CD4-positive, alpha-beta memory T cell (primary cell): ENCODE measurements at regions of chr6 and their contacts with region 1.

Region 1: GRCh38 chr6:52361945-52362442 is at the start of gene PAQR8:
- DNase-seq: peak; percentile 77 to 88 (median 85)
- H3K4me3 ChIP-seq: peak within 1 kb of the TSS; percentile 62 to 97
- H3K4me3 Mint-ChIP-seq: peak within 1 kb of the TSS; percentile 93 to 99 (median 98)
- H3K27ac ChIP-seq: peak within 1 kb of the TSS; percentile 90
- H3K27ac Mint-ChIP-seq: peak within 1 kb of the TSS; percentile 90 to 98 (median 98)
- H3K4me1 ChIP-seq: peaks cover 41% of the 10 kb centered on the region
- H3K4me1 Mint-ChIP-seq: peaks cover 28 to 53% (median 41%) of the 10 kb centered on the region in 4 donors
- H3K27me3 ChIP-seq: no peaks in the 10 kb centered on the region
- H3K27me3 Mint-ChIP-seq: no peaks in the 10 kb centered on the region
- total RNA-seq, gene PAQR8: 36.4 to 40.9 TPM

Region 2: DNA sequence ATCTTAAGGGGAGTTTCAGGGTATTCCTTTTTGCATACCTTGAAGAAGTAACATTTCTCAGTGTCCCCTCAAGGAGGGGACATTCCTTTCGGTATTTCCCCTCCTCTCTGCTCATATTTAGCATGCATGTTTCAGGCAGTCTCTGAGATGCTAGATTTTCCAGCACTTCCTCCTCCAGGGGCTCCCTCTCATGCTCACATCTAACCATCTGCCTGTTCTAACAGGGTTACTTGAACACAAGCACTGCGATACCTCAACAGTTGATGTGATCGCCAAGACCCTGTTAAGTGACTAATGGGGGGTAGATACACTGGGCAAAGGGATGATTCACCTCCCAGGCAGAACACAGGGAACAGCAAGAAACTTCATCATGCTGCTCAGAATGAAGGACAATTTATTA is 64.6 kb before region 1 on chr6:
- CTCF ChIA-PET with region 1: interaction called, 4 read pairs
- POLR2A ChIA-PET with region 1: interaction called, 15 read pairs
- intact Hi-C with region 1: no loop called
- DNase-seq: peak in 1 of 5 donors; percentile 47
- H3K4me3 ChIP-seq: no peak overlapping the region
- H3K4me3 Mint-ChIP-seq: peak overlapping the region; percentile 78 to 91 (median 80)
- H3K27ac ChIP-seq: peak overlapping the region; percentile 69
- H3K27ac Mint-ChIP-seq: peak overlapping the region; percentile 22 to 99 (median 98)
- H3K4me1 ChIP-seq: peaks cover 39% of the 10 kb centered on the region
- H3K4me1 Mint-ChIP-seq: peaks cover 23 to 62% (median 36%) of the 10 kb centered on the region in 4 donors
- H3K27me3 ChIP-seq: no peaks in the 10 kb centered on the region
- H3K27me3 Mint-ChIP-seq: no peaks in the 10 kb centered on the region

Region 3: DNA sequence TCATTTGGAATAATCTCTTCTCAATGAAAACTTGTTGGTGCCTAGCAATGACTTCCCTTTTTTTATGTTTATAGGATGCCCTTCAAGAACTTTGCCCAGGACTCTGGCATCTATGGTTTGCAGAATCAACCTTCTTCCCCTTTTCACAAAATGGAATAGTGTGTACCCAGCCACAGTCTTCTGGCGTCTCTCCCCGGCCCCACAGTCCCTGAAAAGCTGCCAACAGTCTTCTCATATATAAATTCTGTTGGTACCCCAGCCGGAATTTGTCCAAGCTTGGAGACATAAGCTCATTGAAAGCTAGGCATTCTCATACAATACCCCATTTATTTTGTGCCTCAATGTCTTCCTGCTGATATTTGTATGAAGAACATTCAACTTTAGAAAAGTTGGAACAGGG is 51.1 kb before region 1 on chr6:
- CTCF ChIA-PET with region 1: interaction called, 14 read pairs
- POLR2A ChIA-PET with region 1: interaction called, 49 read pairs
- intact Hi-C with region 1: no loop called
- DNase-seq: no peak
- H3K4me3 ChIP-seq: no peak overlapping the region
- H3K4me3 Mint-ChIP-seq: peak overlapping the region in 3 of 8 donors; percentile 9 to 36 (median 23)
- H3K27ac ChIP-seq: no peak overlapping the region
- H3K27ac Mint-ChIP-seq: peak overlapping the region in 3 of 7 donors; percentile 32 to 74 (median 50)
- H3K4me1 ChIP-seq: peaks cover 46% of the 10 kb centered on the region
- H3K4me1 Mint-ChIP-seq: peaks cover 35 to 73% (median 49%) of the 10 kb centered on the region in 4 donors
- H3K27me3 ChIP-seq: no peaks in the 10 kb centered on the region
- H3K27me3 Mint-ChIP-seq: no peaks in the 10 kb centered on the region

Region 4: GRCh38 chr6:52377538-52378221 is 15.7 kb after region 1 on chr6:
- CTCF ChIA-PET with region 1: interaction called, 26 read pairs
- POLR2A ChIA-PET with region 1: interaction called, 43 read pairs
- intact Hi-C with region 1: loop called (anchors 2 kb)
- DNase-seq: peak in 2 of 5 donors; percentile 19 to 48
- H3K4me3 ChIP-seq: no peak overlapping the region
- H3K4me3 Mint-ChIP-seq: peak overlapping the region; percentile 8 to 83 (median 59)
- H3K27ac ChIP-seq: no peak overlapping the region
- H3K27ac Mint-ChIP-seq: peak overlapping the region; percentile 58 to 89 (median 86)
- H3K4me1 ChIP-seq: peaks cover 67% of the 10 kb centered on the region
- H3K4me1 Mint-ChIP-seq: peaks cover 56 to 86% (median 74%) of the 10 kb centered on the region in 4 donors
- H3K27me3 ChIP-seq: no peaks in the 10 kb centered on the region
- H3K27me3 Mint-ChIP-seq: no peaks in the 10 kb centered on the region

Region 5: GRCh38 chr6:52399511-52400312 is 37.7 kb after region 1 on chr6:
- CTCF ChIA-PET with region 1: interaction called, 74 read pairs
- POLR2A ChIA-PET with region 1: interaction called, 133 read pairs
- intact Hi-C with region 1: loop called (anchors 1 kb)
- DNase-seq: peak; percentile 36 to 53 (median 47)
- H3K4me3 ChIP-seq: no peak overlapping the region
- H3K4me3 Mint-ChIP-seq: peak overlapping the region in 7 of 8 donors; percentile 32 to 82 (median 63)
- H3K27ac ChIP-seq: peak overlapping the region; percentile 67
- H3K27ac Mint-ChIP-seq: peak overlapping the region; percentile 95 to 99 (median 96)
- H3K4me1 ChIP-seq: peaks cover 68% of the 10 kb centered on the region
- H3K4me1 Mint-ChIP-seq: peaks cover 51 to 84% (median 60%) of the 10 kb centered on the region in 4 donors
- H3K27me3 ChIP-seq: no peaks in the 10 kb centered on the region
- H3K27me3 Mint-ChIP-seq: no peaks in the 10 kb centered on the region